ENCODE measurements at regions of chr11 and their contacts with region 1.

Region 1: DNA sequence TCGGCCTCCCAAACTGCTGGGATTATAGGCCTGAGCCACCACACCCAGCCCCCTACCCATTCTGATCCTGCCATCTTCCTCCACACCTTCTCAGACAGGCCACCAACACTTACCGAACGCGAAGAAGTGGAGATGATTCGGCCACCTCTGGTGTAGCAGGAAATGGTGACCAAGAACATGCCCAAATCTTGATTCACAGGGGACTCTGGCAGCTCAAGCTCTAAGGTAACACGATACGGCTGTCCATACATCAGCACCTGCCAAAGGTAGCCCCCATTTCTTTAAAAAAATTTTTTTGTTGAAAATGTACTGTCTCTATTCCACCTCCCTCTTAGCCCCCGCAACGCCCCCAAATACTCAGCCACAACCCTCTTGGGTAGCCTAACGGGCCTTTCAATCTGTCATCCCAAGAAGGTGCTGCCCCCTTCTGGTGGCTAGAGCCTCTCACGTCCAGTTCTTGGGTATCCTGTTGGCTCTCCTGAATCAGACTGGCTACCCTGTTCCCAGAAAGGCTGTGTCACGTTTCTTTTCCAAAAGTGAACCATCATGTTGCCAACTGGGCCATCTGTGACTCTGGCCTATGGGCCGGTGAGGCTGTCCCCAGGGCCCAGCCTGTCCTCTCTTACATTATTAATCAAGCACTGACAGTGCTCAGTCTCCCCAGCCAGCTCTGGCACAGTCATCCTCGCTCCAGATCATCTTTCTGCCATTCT is 5.3 kb upstream of the LRRN4CL start:
- DNase-seq: peak; percentile 80
- ATAC-seq: peak; percentile 95
- H3K4me3 ChIP-seq: no peak overlapping the region
- H3K27ac ChIP-seq: no peak overlapping the region
- H3K4me1 ChIP-seq: no peaks in the 10 kb centered on the region
- H3K27me3 ChIP-seq: no peaks in the 10 kb centered on the region
- CTCF ChIP-seq: peak; percentile 95

Region 2: GRCh38 chr11:62678770-62679696 is 15.6 kb before region 1 on chr11 and contains the start of gene UBXN1:
- CTCF ChIA-PET with region 1: interaction called, 12 read pairs
- POLR2A ChIA-PET with region 1: no interaction called
- intact Hi-C with region 1: loop called (anchors 1 kb)
- DNase-seq: peak; percentile 86
- ATAC-seq: peak; percentile 62
- H3K4me3 ChIP-seq: peak within 1 kb of the TSS; percentile 98
- H3K27ac ChIP-seq: peak within 1 kb of the TSS; percentile 53
- H3K4me1 ChIP-seq: peaks cover 23% of the 10 kb centered on the region
- H3K27me3 ChIP-seq: no peaks in the 10 kb centered on the region
- CTCF ChIP-seq: no peak
- total RNA-seq, gene UBXN1: 190 and 311 TPM in 2 replicates